ENCODE measurements at regions of chr12 and their contacts with region 1.

Region 1: GRCh38 chr12:76799362-76799761 is 35.4 kb downstream of the ZDHHC17 start:
- DNase-seq: no peak
- H3K4me3 ChIP-seq: no peak overlapping the region
- CTCF ChIP-seq: no peak
- POLR2A ChIP-seq: no peak

Region 2: GRCh38 chr12:76621582-76622024 is 177.8 kb before region 1 on chr12:
- intact Hi-C with region 1: loop called (anchors 5 kb)
- DNase-seq: peak; percentile 68 to 93
- H3K4me3 ChIP-seq: no peak overlapping the region
- CTCF ChIP-seq: peak in 1 of 3 donors; percentile 70
- POLR2A ChIP-seq: no peak